ENCODE measurements at regions of chr9 and their contacts with region 1.

Region 1: GRCh38 chr9:135926402-135927194 is 19.3 kb upstream of the CAMSAP1 start:
- DNase-seq: peak; percentile 72
- H3K4me3 Mint-ChIP-seq: peak overlapping the region; percentile 7
- H3K27ac Mint-ChIP-seq: peak overlapping the region; percentile 87
- H3K4me1 Mint-ChIP-seq: peaks cover 27% of the 10 kb centered on the region
- H3K27me3 Mint-ChIP-seq: no peaks in the 10 kb centered on the region

Region 2: DNA sequence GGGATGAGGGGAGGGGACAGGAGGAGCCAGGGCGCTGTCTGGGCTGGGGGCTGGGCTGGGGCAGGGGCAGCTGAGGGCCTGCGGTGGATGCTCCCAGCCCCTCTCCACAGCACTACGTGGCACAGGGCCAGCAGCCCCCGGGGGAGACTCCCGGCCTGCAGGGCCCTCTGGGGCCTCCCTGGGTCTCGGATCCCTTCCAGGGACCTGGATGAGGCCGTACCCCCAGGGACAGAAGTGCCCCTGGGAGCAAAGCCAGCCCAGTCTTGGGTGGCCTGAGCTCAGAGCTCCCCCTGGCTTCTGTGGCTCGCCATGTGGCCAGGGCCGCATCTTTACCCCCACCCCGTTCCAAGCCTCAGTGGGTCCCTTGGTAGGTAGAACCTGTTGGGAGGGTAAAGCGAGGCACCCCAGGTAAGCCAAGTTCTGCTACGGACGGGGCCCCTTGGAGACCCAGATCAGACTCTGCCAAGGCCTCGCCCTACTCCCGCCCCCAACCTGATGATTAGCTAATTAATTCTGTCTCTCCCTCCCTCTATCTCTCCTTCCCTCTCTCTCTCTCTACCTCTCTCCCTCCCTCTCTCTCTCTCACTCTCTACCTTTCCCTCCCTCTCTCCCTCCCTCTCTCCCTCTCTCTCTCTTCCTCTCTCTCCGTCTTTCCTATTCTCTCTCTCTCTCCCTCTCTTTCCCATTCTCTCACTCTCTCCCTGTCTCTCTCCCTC is 200.3 kb before region 1 on chr9:
- intact Hi-C with region 1: no loop called
- DNase-seq: no peak
- H3K4me3 Mint-ChIP-seq: no peak overlapping the region
- H3K27ac Mint-ChIP-seq: no peak overlapping the region
- H3K4me1 Mint-ChIP-seq: no peaks in the 10 kb centered on the region
- H3K27me3 Mint-ChIP-seq: no peaks in the 10 kb centered on the region

Region 3: GRCh38 chr9:135864447-135865049 is 62.0 kb before region 1 on chr9:
- intact Hi-C with region 1: loop called (anchors 2 kb)
- DNase-seq: peak; percentile 39
- H3K4me3 Mint-ChIP-seq: no peak overlapping the region
- H3K27ac Mint-ChIP-seq: no peak overlapping the region
- H3K4me1 Mint-ChIP-seq: peaks cover 28% of the 10 kb centered on the region
- H3K27me3 Mint-ChIP-seq: no peaks in the 10 kb centered on the region

Region 4: DNA sequence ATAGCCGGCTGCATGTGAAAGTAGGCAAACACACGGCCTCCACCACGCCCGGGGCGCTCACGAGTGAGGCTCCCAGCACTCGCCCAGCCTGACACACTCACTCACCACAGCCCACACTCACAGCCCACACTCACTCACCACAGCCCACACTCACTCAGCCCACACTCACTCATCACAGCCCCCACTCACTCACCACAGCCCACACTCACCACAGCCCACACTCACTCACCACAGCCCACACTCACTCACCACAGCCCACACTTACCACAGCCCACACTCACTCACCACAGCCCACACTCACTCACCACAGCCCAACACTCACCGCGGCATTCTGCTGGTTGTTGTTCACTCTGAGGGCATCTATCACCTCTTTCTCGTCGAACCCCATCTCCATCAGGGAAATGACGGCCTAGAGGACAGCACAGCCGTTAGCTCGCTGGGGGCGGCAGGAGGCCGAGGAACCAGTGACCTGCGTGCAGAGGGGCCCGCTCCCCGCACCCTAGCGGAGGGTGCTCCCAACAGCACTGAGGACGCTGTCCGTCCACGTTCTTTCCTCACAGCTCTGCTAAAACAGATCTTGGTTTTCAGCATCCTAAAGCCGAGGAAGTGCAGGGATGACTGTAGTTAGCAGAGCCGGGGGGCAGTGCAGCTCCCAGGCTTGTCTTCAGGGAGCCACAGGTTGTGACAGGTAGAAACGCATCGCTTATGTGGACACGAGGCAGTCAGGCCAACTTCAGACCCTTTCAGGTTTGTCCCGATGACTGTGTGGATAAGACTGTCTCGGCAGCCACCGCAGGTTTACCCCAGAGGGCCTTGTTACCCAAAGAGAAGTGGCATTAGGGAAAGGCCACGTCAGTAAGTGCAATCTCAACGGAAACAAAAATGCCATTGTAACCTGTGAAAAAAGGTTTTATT is 13.0 kb after region 1 on chr9:
- intact Hi-C with region 1: loop called (anchors 1 kb)
- DNase-seq: peak; percentile 38
- H3K4me3 Mint-ChIP-seq: peak overlapping the region; percentile 32
- H3K27ac Mint-ChIP-seq: peak overlapping the region; percentile 96
- H3K4me1 Mint-ChIP-seq: peaks cover 7% of the 10 kb centered on the region
- H3K27me3 Mint-ChIP-seq: peaks cover 8% of the 10 kb centered on the region

Region 5: GRCh38 chr9:135961277-135961705 is 34.7 kb after region 1 on chr9 and contains the start of gene UBAC1:
- intact Hi-C with region 1: loop called (anchors 1 kb)
- DNase-seq: peak; percentile 93
- H3K4me3 Mint-ChIP-seq: peak within 1 kb of the TSS; percentile 87
- H3K27ac Mint-ChIP-seq: peak within 1 kb of the TSS; percentile 82
- H3K4me1 Mint-ChIP-seq: peaks cover 25% of the 10 kb centered on the region
- H3K27me3 Mint-ChIP-seq: peaks cover 8% of the 10 kb centered on the region
- total RNA-seq, gene UBAC1: 41.9 and 42.0 TPM in 2 replicates